ENCODE measurements at regions of chr6 and their contacts with region 1.

Region 1: DNA sequence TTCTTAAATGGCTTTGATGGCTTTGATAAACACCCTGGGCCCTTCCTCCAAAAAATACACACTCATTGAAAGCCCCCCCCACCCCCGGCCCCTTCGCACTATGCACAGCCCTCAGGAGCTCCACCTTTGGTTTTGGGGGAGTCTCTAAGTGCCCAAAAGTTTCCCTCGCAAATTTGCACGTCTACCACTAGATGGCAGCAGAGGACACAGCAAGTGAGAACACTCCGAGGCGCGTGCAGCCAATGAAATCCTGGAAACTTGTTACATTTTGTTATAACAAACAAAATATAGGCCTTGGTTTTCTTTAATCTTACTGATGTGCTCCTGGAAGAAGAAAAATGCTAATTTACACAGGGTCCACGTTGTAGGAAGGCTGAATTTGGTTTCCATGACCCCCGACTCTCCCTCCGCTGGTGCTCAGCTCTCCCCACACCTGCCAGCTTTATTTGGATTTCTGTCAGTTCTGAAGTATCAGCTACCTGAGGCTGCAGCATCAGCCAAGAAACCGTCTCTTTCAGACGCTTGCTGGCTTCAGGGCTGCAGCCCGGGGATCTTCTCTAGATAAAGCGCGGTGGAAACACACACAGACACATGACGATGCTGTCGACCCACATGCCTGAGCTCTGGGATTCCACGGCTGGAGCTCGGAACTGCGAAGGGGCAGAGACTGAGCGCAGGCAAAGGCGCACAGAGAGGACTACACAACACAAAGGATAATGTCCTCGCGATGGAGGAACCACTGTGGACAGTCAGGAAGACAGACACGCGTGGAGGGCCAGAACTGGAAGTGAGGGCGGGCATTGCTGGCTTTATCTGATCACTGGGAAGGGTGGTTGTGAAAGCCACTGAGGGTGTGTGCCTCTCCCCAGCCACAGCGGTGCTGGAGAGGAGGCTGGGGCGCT is 148.4 kb upstream of the RPS6KA2 start:
- DNase-seq: peak; percentile 52
- H3K4me3 ChIP-seq: no peak overlapping the region
- H3K27ac ChIP-seq: no peak overlapping the region
- H3K27me3 ChIP-seq: peaks cover 8% of the 10 kb centered on the region
- CTCF ChIP-seq: peak; percentile 94

Region 2: DNA sequence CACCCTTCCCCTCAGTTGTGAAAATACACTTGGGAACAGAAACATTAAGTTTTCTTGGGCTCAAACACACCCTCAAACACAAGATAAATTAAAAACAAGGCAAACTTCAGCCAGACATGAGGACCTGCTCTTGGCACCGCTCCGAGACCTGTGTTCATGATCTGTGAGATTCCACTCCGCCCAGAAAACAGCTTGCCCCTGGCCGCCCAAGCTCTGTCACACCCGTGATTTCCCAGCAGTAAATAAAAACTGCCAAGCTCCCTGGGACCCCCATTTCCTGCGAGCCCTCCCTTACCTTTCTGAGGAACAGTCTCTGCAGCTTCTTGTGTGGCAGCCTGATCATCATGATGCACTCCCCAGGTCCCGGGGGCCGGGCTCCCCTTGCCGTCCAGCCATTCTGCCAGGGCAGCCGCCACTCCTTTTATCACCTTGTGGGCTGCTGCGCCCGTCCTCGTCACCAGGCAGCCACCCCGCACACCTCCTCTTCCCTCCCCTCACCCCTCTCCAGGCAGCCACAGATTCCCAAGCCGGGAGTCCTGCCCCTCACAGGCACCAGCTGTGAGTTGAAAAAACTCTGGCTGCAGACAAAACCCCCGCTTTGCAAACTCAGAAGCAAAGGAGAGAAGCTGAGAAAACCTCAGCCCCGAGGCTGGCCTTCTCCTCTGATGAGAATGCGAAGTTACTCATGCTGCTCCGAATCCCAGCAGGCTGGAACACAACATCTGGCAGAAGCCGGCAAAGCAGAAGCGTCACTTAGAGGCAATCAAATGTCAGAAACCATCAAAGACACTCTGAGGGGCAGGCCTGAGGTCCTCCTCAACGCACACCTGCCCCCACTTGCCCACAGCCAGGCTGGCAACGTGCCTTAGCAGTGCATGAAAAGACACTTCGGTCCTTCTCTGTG is 17.9 kb before region 1 on chr6:
- CTCF ChIA-PET with region 1: interaction called, 61 read pairs
- POLR2A ChIA-PET with region 1: no interaction called
- DNase-seq: no peak
- H3K4me3 ChIP-seq: peak overlapping the region; percentile 29
- H3K27ac ChIP-seq: no peak overlapping the region
- H3K27me3 ChIP-seq: peaks cover 26% of the 10 kb centered on the region
- CTCF ChIP-seq: no peak

Region 3: GRCh38 chr6:167113047-167113754 is 337.8 kb after region 1 on chr6:
- CTCF ChIA-PET with region 1: no interaction called
- POLR2A ChIA-PET with region 1: no interaction called
- DNase-seq: no peak
- H3K4me3 ChIP-seq: no peak overlapping the region
- H3K27ac ChIP-seq: no peak overlapping the region
- H3K27me3 ChIP-seq: no peaks in the 10 kb centered on the region
- CTCF ChIP-seq: no peak